CD4-positive, alpha-beta memory T cell (primary cell): ENCODE measurements at regions of chr12 and their contacts with region 1.

Region 1: GRCh38 chr12:29427964-29428363 is 47.0 kb upstream of the ERGIC2 start:
- DNase-seq: peak in 4 of 5 donors; percentile 9 to 24 (median 23)
- H3K4me3 ChIP-seq: no peak overlapping the region
- H3K4me3 Mint-ChIP-seq: no peak overlapping the region
- H3K27ac ChIP-seq: no peak overlapping the region
- H3K27ac Mint-ChIP-seq: peak overlapping the region in 1 of 7 donors; percentile 39
- H3K4me1 ChIP-seq: no peaks in the 10 kb centered on the region
- H3K4me1 Mint-ChIP-seq: peaks cover 0 to 3% (median 1%) of the 10 kb centered on the region in 4 donors
- H3K27me3 ChIP-seq: no peaks in the 10 kb centered on the region
- H3K27me3 Mint-ChIP-seq: peaks cover 15% of the 10 kb centered on the region in 2 donors

Region 2: GRCh38 chr12:29073628-29074239 is 354.2 kb before region 1 on chr12:
- CTCF ChIA-PET with region 1: interaction called, 5 read pairs
- POLR2A ChIA-PET with region 1: no interaction called
- intact Hi-C with region 1: loop called (anchors 1 kb)
- DNase-seq: peak; percentile 32 to 49 (median 37)
- H3K4me3 ChIP-seq: no peak overlapping the region
- H3K4me3 Mint-ChIP-seq: no peak overlapping the region
- H3K27ac ChIP-seq: no peak overlapping the region
- H3K27ac Mint-ChIP-seq: no peak overlapping the region
- H3K4me1 ChIP-seq: no peaks in the 10 kb centered on the region
- H3K4me1 Mint-ChIP-seq: peaks cover 0 to 2% (median 0%) of the 10 kb centered on the region in 4 donors
- H3K27me3 ChIP-seq: no peaks in the 10 kb centered on the region
- H3K27me3 Mint-ChIP-seq: peaks cover 13 to 18% of the 10 kb centered on the region in 2 donors

Region 3: DNA sequence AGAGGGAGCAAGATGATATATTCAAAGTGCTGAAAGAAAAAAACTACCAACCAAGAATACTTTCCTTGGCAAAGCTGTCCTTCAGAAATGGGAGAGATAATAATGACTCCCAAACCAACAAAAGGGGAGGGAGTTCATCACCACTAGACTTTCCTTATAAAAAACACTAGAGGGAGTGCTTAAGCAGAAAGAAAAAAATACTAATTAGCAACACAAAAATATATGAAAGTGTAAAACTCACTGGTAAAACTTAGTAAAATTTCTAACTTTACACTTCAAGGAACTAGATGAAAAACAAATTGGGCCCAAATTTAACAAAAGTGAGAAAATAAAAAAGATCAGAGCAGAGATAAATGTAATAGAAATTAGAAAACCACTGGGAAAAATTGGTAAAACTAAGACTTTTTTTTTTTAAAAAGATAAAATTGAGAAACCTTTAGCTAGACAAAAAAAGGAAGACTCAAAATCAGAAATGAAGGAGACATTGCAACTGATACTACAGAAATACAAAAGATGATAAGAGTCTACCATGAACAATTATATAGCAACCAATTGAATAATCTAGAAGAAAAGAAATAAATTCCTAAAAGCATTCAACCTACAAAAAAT is 339.2 kb before region 1 on chr12:
- CTCF ChIA-PET with region 1: interaction called, 4 read pairs
- POLR2A ChIA-PET with region 1: no interaction called
- intact Hi-C with region 1: loop called (anchors 2 kb)
- DNase-seq: peak in 4 of 5 donors; percentile 22 to 33 (median 31)
- H3K4me3 ChIP-seq: no peak overlapping the region
- H3K4me3 Mint-ChIP-seq: no peak overlapping the region
- H3K27ac ChIP-seq: no peak overlapping the region
- H3K27ac Mint-ChIP-seq: no peak overlapping the region
- H3K4me1 ChIP-seq: no peaks in the 10 kb centered on the region
- H3K4me1 Mint-ChIP-seq: peaks cover 0 to 5% (median 3%) of the 10 kb centered on the region in 4 donors
- H3K27me3 ChIP-seq: no peaks in the 10 kb centered on the region
- H3K27me3 Mint-ChIP-seq: peaks cover 0 to 3% of the 10 kb centered on the region in 2 donors

Region 4: GRCh38 chr12:29309320-29309902 is 118.6 kb before region 1 on chr12:
- CTCF ChIA-PET with region 1: interaction called, 5 read pairs
- POLR2A ChIA-PET with region 1: no interaction called
- intact Hi-C with region 1: loop called (anchors 1 kb)
- DNase-seq: no peak
- H3K4me3 ChIP-seq: no peak overlapping the region
- H3K4me3 Mint-ChIP-seq: no peak overlapping the region
- H3K27ac ChIP-seq: no peak overlapping the region
- H3K27ac Mint-ChIP-seq: no peak overlapping the region
- H3K4me1 ChIP-seq: no peaks in the 10 kb centered on the region
- H3K4me1 Mint-ChIP-seq: no peaks in the 10 kb centered on the region
- H3K27me3 ChIP-seq: no peaks in the 10 kb centered on the region
- H3K27me3 Mint-ChIP-seq: no peaks in the 10 kb centered on the region

Region 5: GRCh38 chr12:29350080-29350479 is 77.9 kb before region 1 on chr12:
- CTCF ChIA-PET with region 1: interaction called, 9 read pairs
- POLR2A ChIA-PET with region 1: no interaction called
- intact Hi-C with region 1: loop called (anchors 5 kb)
- DNase-seq: no peak
- H3K4me3 ChIP-seq: no peak overlapping the region
- H3K4me3 Mint-ChIP-seq: no peak overlapping the region
- H3K27ac ChIP-seq: no peak overlapping the region
- H3K27ac Mint-ChIP-seq: peak overlapping the region in 2 of 7 donors; percentile 4 to 27
- H3K4me1 ChIP-seq: no peaks in the 10 kb centered on the region
- H3K4me1 Mint-ChIP-seq: peaks cover 0 to 1% (median 0%) of the 10 kb centered on the region in 4 donors
- H3K27me3 ChIP-seq: no peaks in the 10 kb centered on the region
- H3K27me3 Mint-ChIP-seq: no peaks in the 10 kb centered on the region

Region 6: GRCh38 chr12:29380536-29381523 is 47.1 kb before region 1 on chr12 and contains the start of gene ERGIC2:
- CTCF ChIA-PET with region 1: interaction called, 12 read pairs
- POLR2A ChIA-PET with region 1: interaction called, 8 read pairs
- intact Hi-C with region 1: loop called (anchors 2 kb)
- DNase-seq: peak; percentile 93 to 96 (median 96)
- H3K4me3 ChIP-seq: peak within 1 kb of the TSS; percentile 92 to 100
- H3K4me3 Mint-ChIP-seq: peak within 1 kb of the TSS; percentile 89 to 98 (median 94)
- H3K27ac ChIP-seq: peak within 1 kb of the TSS; percentile 95
- H3K27ac Mint-ChIP-seq: peak within 1 kb of the TSS; percentile 94 to 99 (median 98)
- H3K4me1 ChIP-seq: peaks cover 27% of the 10 kb centered on the region
- H3K4me1 Mint-ChIP-seq: peaks cover 24 to 57% (median 46%) of the 10 kb centered on the region in 4 donors
- H3K27me3 ChIP-seq: no peaks in the 10 kb centered on the region
- H3K27me3 Mint-ChIP-seq: no peaks in the 10 kb centered on the region
- total RNA-seq, gene ERGIC2: 74.9 to 82.9 TPM